Heart left ventricle (tissue), 16 donors: ENCODE measurements at regions of chr16 and their contacts with region 1.

Region 1: DNA sequence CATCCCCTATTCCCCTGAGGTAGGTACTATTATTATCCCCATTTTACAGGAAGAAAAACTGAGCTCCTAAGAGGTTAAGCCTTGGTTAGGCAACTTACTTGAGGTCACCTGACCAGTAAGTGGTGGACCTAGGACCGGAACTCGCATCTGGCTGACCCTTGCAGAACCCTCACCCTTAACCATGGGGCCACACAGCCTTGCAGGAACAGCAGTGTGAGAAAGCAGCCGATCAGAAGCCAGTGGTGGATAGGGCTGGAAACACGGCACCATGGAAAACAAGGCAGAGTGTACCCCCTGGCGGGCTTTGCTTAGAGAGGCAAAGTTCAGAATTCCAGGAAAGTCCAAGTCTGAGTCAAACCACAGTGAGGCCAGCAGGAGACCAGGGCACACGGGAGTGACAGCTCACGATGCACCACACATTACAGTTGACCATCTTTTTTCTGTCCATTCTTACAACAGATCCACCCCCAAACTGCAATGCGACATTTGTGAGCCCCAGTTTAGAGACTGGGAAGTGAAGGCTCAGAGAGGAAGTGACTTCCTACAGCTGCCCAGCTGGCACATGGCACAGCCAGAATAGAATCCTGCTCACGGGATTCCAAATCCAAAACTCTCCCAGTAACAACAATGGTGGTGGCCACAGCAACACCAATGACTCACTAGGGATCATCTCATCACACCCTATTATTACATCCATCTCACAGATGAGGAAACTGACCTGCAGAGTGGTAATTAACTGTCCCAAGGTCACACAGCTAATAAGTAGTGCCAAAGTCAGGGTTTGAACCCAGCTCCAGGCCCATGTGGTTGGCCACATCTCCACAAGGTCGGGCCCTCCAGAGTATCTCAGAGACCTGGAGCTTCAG is 20.3 kb downstream of the KIFC3 start:
- DNase-seq: peak in 2 of 5 donors; percentile 11 to 22
- ATAC-seq: no peak
- H3K4me3 ChIP-seq: no peak overlapping the region
- H3K27ac ChIP-seq: no peak overlapping the region
- H3K4me1 ChIP-seq: peaks cover 0 to 14% (median 10%) of the 10 kb centered on the region in 12 donors
- H3K27me3 ChIP-seq: no peaks in the 10 kb centered on the region
- CTCF ChIP-seq: no peak
- POLR2A ChIP-seq: no peak

Region 2: GRCh38 chr16:57689762-57690558 is 92.0 kb before region 1 on chr16:
- intact Hi-C with region 1: no loop called
- DNase-seq: peak in 1 of 5 donors; percentile 45
- ATAC-seq: peak in 3 of 4 donors; percentile 33 to 92 (median 45)
- H3K4me3 ChIP-seq: no peak overlapping the region
- H3K27ac ChIP-seq: peak overlapping the region in 4 of 12 donors; percentile 39 to 53 (median 44)
- H3K4me1 ChIP-seq: peaks cover 0 to 16% (median 0%) of the 10 kb centered on the region in 12 donors
- H3K27me3 ChIP-seq: peaks cover 0 to 10% (median 0%) of the 10 kb centered on the region in 9 donors
- CTCF ChIP-seq: no peak
- POLR2A ChIP-seq: no peak

Region 3: GRCh38 chr16:57846078-57846697 is 64.2 kb after region 1 on chr16:
- intact Hi-C with region 1: loop called in 1 of 10 experiments (anchors 5 kb)
- DNase-seq: no peak
- ATAC-seq: no peak
- H3K4me3 ChIP-seq: no peak overlapping the region
- H3K27ac ChIP-seq: no peak overlapping the region
- H3K4me1 ChIP-seq: no peaks in the 10 kb centered on the region
- H3K27me3 ChIP-seq: no peaks in the 10 kb centered on the region
- CTCF ChIP-seq: no peak
- POLR2A ChIP-seq: no peak